GM10248 (cell line): ENCODE measurements at regions of chr16 and their contacts with region 1.

Region 1: DNA sequence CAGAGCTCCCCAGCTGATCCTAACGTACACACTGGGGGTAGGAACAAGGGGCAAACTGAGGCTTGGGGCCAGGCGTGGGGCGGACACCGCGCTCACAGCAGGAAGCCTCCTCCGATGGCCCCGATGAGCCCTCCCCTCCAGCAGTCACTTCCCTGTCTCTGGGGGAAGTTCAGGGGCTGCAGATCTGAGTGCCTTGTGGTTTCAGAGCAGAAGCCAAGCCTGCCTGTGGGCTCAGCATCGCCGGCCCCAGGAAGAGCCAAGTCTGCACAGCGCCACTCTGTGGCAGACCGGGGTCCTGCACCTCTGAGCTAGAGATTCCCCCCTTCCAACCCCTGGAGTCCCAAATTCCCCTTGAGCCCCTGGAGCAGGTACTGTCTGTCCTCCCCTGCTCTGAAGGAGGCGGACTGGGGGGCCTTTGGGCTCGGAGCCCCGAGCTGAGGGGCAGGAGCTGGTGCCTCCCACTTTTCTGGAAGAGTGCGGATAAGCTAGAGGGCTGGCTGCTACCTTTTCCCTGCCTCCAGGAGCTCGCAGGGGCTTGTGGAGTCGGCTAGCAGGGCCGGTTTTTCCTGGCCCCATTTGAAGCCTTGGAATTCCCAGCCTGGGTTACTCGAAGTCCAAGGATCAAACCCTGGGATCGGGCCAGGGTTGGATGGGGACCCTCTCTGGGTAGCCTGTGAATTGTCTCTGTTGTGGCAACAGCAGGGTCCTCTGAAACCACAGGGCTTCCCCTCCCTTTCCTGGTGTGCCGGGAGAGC is 2.9 kb downstream of the GSE1 start:
- DNase-seq: peak; percentile 91
- CTCF ChIP-seq: peak; percentile 93

Region 2: GRCh38 chr16:85253084-85253941 is 362.7 kb before region 1 on chr16:
- CTCF ChIA-PET with region 1: interaction called, 12 read pairs
- POLR2A ChIA-PET with region 1: no interaction called
- DNase-seq: peak; percentile 90
- CTCF ChIP-seq: peak; percentile 98

Region 3: GRCh38 chr16:85428168-85428898 is 187.7 kb before region 1 on chr16:
- CTCF ChIA-PET with region 1: interaction called, 71 read pairs
- POLR2A ChIA-PET with region 1: no interaction called
- DNase-seq: peak; percentile 79
- CTCF ChIP-seq: peak; percentile 82

Region 4: DNA sequence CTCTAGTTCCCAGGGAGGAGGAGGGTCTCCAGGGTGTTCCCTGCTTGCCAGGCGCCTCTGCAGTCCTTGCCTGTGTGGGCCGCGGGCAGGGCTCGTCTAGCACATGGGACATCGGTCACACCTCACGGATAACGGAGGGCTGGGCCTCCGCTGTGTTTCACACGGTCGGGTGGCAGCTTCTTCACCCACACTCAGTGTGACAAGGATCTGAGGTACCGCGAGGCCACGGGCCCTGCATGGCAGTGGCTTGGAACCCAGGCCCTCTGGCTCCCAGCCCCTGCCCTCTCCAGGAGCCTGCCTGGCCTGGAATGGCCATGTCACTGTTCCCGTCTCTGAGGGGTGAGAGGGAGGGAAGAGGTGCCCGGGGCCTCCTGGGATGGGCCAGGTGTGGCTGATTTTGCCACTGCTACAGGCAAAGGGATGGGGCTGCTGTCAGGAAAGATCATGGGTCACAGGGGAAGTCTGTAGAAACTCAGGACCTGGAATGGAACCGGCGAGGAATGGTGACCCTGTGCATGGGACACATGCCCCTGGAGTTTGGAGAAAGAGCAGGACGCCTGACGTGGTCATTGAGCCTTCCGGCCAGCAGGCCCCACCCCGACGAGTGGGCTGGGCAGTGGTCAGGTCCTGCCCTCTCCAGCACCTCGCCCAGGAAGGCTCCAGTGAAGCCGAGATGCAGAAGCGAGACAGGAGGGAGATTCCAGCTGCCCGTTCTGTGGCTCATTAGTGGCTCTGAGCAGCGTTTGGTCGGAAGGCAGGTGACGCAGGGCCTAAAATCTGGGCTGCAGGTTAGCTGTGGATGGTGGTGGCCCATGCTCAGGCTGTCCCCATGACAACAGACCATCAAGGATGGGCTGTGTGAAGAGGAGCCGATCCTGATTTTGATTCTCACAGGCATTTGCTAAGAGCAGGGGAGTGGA is 79.4 kb before region 1 on chr16:
- CTCF ChIA-PET with region 1: interaction called, 12 read pairs
- POLR2A ChIA-PET with region 1: no interaction called
- DNase-seq: no peak
- CTCF ChIP-seq: no peak

Region 5: DNA sequence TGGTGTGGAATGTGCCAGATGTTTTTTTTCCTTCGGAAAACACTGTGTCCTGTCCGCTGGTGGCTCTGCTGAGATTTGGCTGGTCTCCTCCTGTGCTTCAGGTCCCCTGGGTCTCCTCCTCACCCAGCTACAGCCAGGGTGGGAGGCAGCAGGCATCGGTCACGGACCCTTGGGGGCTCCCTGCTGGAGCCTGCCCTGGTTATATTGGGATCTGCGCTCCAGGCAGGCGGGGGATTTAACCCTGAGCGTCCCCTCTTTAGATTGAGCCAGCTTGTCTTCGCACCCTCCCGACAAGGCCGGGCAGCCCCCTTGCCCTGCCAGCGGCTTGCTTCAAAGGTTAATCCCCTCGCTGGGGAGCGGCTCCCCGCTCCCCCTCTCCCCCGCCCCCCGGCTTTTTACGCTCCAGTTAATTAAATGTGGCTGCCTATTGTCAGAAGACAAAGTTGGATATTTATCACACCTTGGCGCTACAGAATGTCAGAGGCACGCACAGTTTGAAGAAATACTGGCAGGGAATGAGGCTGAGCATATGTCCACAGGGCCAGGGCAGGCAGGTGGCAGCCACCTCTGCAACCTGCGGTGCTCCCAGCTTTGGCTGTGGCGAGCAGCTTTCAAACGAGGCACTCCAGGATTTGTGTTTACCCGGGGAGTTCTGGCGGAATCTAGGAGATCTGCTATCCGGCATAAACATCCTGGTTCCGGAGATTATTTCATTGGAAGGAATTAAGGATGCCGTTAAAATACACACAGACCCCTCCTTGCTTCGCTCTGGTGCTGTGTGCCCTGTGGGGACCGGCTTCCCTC is 41.2 kb before region 1 on chr16:
- CTCF ChIA-PET with region 1: interaction called, 25 read pairs
- POLR2A ChIA-PET with region 1: no interaction called
- DNase-seq: no peak
- CTCF ChIP-seq: no peak

Region 6: DNA sequence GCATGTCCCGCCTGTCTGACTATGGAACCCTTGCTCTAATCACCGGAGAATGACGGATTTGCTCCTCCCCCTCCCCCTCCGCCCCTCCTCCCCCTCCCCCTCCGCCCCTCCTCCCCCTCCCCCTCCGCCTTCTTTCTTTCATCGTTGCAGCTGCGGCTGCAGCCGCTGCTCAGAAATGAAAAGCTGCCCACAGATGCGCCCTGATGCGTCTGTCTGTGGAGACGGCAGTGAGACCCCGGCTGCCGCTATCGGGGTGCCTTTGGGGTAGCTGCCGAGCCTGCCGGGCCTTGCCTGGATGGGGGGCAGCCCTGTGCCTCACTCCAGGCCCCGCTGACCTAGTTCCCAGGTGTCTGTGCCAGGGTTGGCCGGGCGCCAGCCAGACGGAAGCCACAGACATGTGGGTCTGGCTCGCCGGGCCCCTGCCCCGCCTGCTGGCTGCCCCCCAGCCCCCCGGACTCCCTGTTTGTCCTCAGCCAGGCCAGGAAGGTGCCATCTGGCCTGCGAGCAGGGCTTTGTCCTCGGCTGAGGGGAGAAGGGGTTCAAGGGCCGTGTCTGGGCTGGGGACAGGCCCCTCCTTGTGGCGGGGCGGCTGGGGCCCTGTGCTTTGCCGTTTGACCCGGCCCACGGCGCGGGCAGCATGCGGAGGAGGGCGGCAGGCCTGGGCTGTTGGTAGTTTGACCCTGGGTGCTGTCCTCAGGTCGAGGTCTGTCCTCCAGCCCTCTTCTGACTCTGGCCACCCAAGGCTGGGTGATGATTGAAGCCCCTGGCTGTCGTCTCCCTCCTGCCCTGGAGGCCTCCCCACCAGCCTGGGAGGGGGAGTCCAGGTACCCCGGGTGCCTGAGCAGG is 35.2 kb after region 1 on chr16:
- CTCF ChIA-PET with region 1: interaction called, 21 read pairs
- POLR2A ChIA-PET with region 1: no interaction called
- DNase-seq: no peak
- CTCF ChIP-seq: no peak

Region 7: DNA sequence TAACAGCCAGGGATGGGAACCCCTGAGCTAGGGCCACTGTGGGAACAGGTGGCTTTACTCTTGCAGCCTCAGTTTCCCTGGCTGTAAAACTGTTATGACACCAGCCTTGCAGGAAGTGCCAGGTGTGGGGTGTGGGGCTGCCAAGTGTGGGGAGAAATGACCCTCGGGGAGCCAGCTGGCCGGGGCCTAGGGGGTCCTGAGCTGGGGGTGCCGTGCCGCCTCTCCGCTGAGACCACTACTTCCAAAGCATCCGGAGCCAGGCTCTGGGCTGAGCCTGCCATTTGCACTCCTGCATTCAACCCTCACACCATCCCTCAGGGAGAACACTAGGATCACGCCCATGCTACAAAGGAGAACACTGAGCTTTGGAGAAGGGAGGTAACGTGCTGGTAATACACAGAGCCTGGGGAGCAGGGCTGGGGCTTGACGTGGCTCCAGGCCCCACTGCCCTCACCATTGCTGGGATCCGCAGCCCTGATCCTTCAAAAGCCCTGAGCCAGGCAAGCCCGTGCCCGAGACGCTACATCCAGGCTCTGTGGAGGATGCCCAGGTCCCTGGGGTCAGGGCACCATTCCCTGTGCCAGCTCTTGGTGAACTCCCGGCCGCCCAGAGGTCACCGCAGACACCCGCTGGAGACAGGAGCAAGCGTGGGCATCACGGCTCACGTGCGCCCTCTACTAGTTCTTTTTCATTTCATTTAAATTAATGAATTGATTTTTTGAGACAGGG is 101.5 kb after region 1 on chr16:
- CTCF ChIA-PET with region 1: interaction called, 18 read pairs
- POLR2A ChIA-PET with region 1: no interaction called
- DNase-seq: peak; percentile 79
- CTCF ChIP-seq: peak; percentile 54